Mammary epithelial cell (primary cell): ENCODE measurements at regions of chr15 and their contacts with region 1.

Region 1: DNA sequence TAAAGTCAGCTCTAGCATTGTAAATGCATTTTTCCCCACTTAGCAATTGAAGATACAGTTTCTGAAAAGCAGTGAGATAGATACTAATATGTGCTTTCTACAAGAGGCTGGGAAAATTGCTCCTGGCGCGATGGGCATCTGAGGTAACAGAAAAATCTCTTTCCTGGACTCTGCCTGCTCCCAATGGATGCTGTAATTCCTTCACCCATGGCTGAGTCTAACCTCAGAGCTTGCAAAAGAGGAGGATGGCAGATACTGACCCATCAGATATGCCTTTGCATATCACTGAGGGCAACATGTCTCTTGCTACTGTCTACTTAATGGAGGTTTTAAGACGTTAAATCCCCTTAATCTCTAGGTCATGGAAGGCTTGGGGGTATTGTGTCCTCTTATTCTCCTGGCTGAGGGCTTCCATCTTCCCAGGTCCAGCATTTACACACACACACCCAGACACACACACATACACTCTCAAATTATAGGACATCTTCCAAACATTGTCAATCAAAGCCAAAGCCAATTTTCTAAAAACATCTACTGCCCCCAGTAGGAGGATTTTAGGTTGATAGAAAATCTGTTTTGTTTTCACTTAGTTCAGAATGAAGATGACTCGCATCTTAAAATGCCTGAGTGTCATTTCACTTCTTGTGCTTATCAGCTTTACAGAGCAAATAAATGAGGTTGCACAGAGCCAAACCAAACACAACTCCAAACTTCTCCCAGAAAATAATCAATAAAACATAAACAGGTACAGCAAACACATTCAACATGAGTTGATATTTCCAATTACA is 2.4 kb downstream of the TRPM1 start:
- DNase-seq: no peak
- H3K4me3 ChIP-seq: no peak overlapping the region
- H3K27ac ChIP-seq: no peak overlapping the region
- H3K4me1 ChIP-seq: no peaks in the 10 kb centered on the region
- H3K27me3 ChIP-seq: no peaks in the 10 kb centered on the region
- CTCF ChIP-seq: peak in 1 of 2 donors; percentile 19

Region 2: DNA sequence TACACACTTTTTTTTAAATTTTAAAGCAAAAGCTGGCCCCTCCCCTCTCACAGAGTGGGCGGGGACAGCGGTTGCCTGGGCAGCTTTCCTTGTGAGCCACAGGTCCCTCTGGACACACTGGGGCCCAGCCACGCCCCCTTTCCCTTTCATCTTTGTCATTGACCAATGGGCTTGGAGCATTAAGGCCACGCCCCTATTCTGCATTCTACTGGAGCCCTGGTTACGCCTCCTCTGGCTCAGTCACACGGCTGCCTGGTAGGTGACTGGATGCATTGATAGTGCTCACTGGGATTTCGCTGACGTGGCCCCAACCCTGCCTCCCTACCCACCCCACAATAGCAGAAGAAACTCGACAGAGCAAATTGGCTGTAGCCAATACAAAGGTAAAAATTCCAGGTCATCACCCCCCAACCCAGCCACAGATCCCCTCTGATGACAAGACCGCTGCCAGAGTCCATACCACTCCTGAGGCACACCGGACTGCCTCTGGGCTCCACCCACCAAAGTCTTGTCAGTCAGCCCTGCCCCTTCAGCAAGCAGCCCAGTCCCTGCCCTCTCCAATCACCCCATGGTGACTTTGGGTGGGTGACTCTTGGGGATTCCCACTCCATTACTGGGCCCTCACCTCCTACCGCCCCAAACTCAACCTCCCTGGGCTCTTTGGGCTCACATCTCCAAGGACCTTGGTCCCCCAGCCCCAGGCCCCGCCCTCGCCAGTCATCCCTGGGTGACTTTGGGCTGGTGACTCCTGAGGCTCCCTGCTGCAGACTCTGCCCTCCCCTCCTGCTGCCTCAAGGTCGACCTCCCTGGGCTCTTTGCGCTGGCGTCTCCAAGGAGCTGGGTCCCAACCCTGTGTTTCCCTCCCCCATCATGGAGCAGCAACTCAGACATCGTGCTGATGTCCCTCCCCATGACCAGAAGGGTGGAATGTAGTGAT is 307.6 kb before region 1 on chr15:
- CTCF ChIA-PET with region 1: no interaction called
- dilution Hi-C with region 1: loop called (anchors 25 kb)
- in situ Hi-C with region 1: no loop called
- intact Hi-C with region 1: no loop called
- DNase-seq: no peak
- H3K4me3 ChIP-seq: no peak overlapping the region
- H3K27ac ChIP-seq: no peak overlapping the region
- H3K4me1 ChIP-seq: no peaks in the 10 kb centered on the region
- H3K27me3 ChIP-seq: no peaks in the 10 kb centered on the region
- CTCF ChIP-seq: no peak

Region 3: DNA sequence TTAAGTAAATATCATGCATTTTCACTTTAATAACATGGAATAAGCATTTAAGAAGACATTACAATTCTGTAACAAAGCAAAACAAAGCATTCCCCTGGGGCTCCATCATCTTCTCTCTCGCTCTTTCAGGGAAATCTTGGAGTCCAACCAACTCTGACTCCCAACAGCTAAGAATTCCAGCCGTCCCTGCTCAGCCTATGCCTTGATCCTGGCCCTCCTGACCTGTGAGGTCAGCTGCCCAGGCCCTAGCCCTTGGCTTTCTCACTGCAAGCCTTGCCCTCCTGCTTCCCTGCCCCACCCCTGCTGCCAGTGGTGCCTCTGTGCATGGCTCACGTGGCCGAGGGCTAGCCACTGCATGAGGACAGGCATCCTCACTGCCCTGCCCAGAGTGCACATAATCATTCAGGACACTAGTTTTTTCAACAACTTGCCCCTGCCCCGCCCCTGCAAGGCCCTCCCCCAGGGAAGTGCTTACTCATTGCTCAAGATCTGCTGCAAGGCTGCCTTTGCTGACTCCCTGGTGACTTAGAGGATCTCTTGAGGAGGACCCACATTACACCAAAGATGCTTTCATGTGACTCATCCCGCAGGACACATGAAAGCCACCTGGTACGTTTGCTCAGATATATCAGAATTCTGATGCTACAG is 145.3 kb before region 1 on chr15:
- CTCF ChIA-PET with region 1: no interaction called
- dilution Hi-C with region 1: no loop called
- in situ Hi-C with region 1: no loop called
- intact Hi-C with region 1: loop called (anchors 5 kb)
- DNase-seq: peak; percentile 87
- H3K4me3 ChIP-seq: no peak overlapping the region
- H3K27ac ChIP-seq: peak overlapping the region; percentile 3
- H3K4me1 ChIP-seq: peaks cover 8% of the 10 kb centered on the region
- H3K27me3 ChIP-seq: no peaks in the 10 kb centered on the region
- CTCF ChIP-seq: no peak

Region 4: GRCh38 chr15:31042751-31043150 is 56.4 kb before region 1 on chr15:
- CTCF ChIA-PET with region 1: no interaction called
- dilution Hi-C with region 1: no loop called
- in situ Hi-C with region 1: no loop called
- intact Hi-C with region 1: no loop called
- DNase-seq: no peak
- H3K4me3 ChIP-seq: no peak overlapping the region
- H3K27ac ChIP-seq: no peak overlapping the region
- H3K4me1 ChIP-seq: no peaks in the 10 kb centered on the region
- H3K27me3 ChIP-seq: no peaks in the 10 kb centered on the region
- CTCF ChIP-seq: no peak

Region 5: GRCh38 chr15:31158858-31159569 is 59.9 kb after region 1 on chr15:
- CTCF ChIA-PET with region 1: no interaction called
- dilution Hi-C with region 1: no loop called
- in situ Hi-C with region 1: no loop called
- intact Hi-C with region 1: no loop called
- DNase-seq: no peak
- H3K4me3 ChIP-seq: no peak overlapping the region
- H3K27ac ChIP-seq: no peak overlapping the region
- H3K4me1 ChIP-seq: peaks cover 8% of the 10 kb centered on the region
- H3K27me3 ChIP-seq: no peaks in the 10 kb centered on the region
- CTCF ChIP-seq: no peak

Region 6: GRCh38 chr15:31782016-31782770 is 683.0 kb after region 1 on chr15:
- CTCF ChIA-PET with region 1: no interaction called
- dilution Hi-C with region 1: no loop called
- in situ Hi-C with region 1: no loop called
- intact Hi-C with region 1: no loop called
- DNase-seq: no peak
- H3K4me3 ChIP-seq: no peak overlapping the region
- H3K27ac ChIP-seq: no peak overlapping the region
- H3K4me1 ChIP-seq: no peaks in the 10 kb centered on the region
- H3K27me3 ChIP-seq: no peaks in the 10 kb centered on the region
- CTCF ChIP-seq: no peak